ENCODE measurements at regions of chr11 and their contacts with region 1.

Region 1: GRCh38 chr11:62855571-62856332 is 16.4 kb upstream of the WDR74 start:
- DNase-seq: peak; percentile 96 to 100 (median 99)
- ATAC-seq: peak; percentile 97
- H3K4me3 ChIP-seq: peak overlapping the region; percentile 97
- H3K4me3 Mint-ChIP-seq: peak overlapping the region; percentile 93 to 100 (median 98)
- H3K27ac ChIP-seq: peak overlapping the region; percentile 85
- H3K27ac Mint-ChIP-seq: peak overlapping the region; percentile 86 to 98 (median 94)
- H3K4me1 ChIP-seq: peaks cover 33 to 39% of the 10 kb centered on the region in 2 donors
- H3K4me1 Mint-ChIP-seq: peaks cover 34 to 77% (median 46%) of the 10 kb centered on the region in 7 donors
- H3K27me3 ChIP-seq: no peaks in the 10 kb centered on the region
- H3K27me3 Mint-ChIP-seq: peaks cover 0 to 6% (median 0%) of the 10 kb centered on the region in 5 donors

Region 2: GRCh38 chr11:61627567-61628445 is 1227.9 kb before region 1 on chr11:
- CTCF ChIA-PET with region 1: no interaction called
- POLR2A ChIA-PET with region 1: no interaction called
- intact Hi-C with region 1: no loop called
- DNase-seq: peak in 3 of 9 donors; percentile 4 to 41 (median 13)
- ATAC-seq: peak; percentile 50
- H3K4me3 ChIP-seq: no peak overlapping the region
- H3K4me3 Mint-ChIP-seq: no peak overlapping the region
- H3K27ac ChIP-seq: no peak overlapping the region
- H3K27ac Mint-ChIP-seq: no peak overlapping the region
- H3K4me1 ChIP-seq: no peaks in the 10 kb centered on the region
- H3K4me1 Mint-ChIP-seq: peaks cover 0 to 6% (median 0%) of the 10 kb centered on the region in 7 donors
- H3K27me3 ChIP-seq: no peaks in the 10 kb centered on the region
- H3K27me3 Mint-ChIP-seq: peaks cover 0 to 16% (median 0%) of the 10 kb centered on the region in 5 donors

Region 3: DNA sequence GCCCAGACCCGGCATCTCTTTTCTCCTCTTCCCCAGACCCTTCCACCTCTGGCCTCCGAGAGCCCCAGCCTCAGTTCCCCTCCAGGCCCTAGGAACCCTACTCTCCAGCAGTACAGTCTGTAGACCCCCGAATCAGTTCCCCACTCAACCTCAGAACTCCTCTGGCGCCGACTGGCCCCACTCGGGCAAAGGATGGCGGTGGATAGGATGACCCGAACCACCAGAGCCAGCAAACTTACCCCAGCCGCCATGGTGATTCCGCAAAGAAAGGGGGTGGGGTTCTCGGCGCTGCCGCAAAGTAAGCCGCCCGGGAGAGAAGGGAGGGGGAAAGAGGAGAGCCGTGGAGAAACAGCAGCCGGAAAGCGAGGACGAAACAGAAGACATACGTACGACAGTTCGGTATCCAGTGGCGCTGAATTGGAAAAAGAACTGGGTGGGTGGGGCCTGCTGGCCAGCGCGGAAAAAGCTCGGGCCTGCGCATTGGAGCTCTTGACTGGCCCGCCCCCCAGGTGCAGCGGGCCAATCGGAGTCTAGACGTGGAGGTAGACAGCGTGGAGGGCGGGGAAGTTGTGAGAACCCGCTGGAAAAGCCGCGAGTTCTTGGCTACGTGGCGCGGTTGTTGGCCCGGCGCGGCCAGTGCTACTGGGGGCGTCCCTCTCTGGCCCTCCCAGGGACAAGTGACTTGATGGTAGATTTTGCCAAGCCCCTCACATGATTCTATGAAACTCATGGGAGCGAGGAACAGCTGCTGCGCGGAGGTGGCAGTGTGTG is 282.0 kb before region 1 on chr11 and contains the start of gene EEF1G:
- CTCF ChIA-PET with region 1: no interaction called
- POLR2A ChIA-PET with region 1: interaction called, 8 read pairs
- intact Hi-C with region 1: loop called in 1 of 2 experiments (anchors 5 kb)
- DNase-seq: peak; percentile 88 to 100 (median 99)
- ATAC-seq: peak; percentile 96
- H3K4me3 ChIP-seq: peak within 1 kb of the TSS; percentile 82
- H3K4me3 Mint-ChIP-seq: peak within 1 kb of the TSS; percentile 94 to 100 (median 97)
- H3K27ac ChIP-seq: peak within 1 kb of the TSS; percentile 88
- H3K27ac Mint-ChIP-seq: peak within 1 kb of the TSS; percentile 81 to 98 (median 95)
- H3K4me1 ChIP-seq: peaks cover 8 to 11% of the 10 kb centered on the region in 2 donors
- H3K4me1 Mint-ChIP-seq: peaks cover 39 to 61% (median 45%) of the 10 kb centered on the region in 7 donors
- H3K27me3 ChIP-seq: no peaks in the 10 kb centered on the region
- H3K27me3 Mint-ChIP-seq: no peaks in the 10 kb centered on the region
- total RNA-seq, gene EEF1G: 1,186 to 2,550 (median 2,338) TPM

Region 4: DNA sequence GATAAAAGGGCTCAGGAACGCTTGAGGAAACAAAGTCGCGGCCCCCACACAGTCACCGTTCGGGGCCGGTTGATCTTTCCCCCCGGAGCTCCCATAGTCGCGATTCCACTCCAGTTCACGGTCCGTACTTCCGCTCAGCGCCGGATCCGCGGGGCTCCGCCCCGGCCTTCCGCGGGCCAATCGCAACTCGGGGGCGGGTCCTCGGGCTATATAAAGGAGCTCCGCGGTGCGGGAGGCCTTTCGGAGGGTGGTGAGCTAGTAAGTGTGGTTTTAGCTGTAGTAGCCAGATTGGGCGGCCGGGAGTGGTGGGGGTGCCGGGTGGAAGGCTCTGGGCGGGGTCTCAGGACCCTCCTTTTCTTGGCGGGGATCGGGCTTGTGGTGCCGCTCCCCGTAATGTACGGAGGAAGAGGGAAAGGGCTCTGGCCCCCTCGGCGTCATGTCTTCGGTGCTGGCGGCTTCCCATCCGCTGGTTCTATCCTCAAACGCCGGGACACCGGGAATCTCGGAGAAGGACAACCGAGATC is 190.6 kb before region 1 on chr11 and contains the starts of genes C11orf98 and CSKMT:
- CTCF ChIA-PET with region 1: interaction called, 3 read pairs
- POLR2A ChIA-PET with region 1: interaction called, 31 read pairs
- intact Hi-C with region 1: loop called in 1 of 2 experiments (anchors 5 kb)
- DNase-seq: peak; percentile 90 to 99 (median 95)
- ATAC-seq: peak; percentile 97
- H3K4me3 ChIP-seq: peak within 1 kb of the TSS; percentile 85
- H3K4me3 Mint-ChIP-seq: peak within 1 kb of the TSS; percentile 93 to 98 (median 96)
- H3K27ac ChIP-seq: peak within 1 kb of the TSS; percentile 85
- H3K27ac Mint-ChIP-seq: peak within 1 kb of the TSS; percentile 89 to 97 (median 93)
- H3K4me1 ChIP-seq: peaks cover 16 to 21% of the 10 kb centered on the region in 2 donors
- H3K4me1 Mint-ChIP-seq: peaks cover 13 to 45% (median 32%) of the 10 kb centered on the region in 7 donors
- H3K27me3 ChIP-seq: no peaks in the 10 kb centered on the region
- H3K27me3 Mint-ChIP-seq: no peaks in the 10 kb centered on the region
- total RNA-seq, gene C11orf98: 23.2 to 103 (median 47.6) TPM
- total RNA-seq, gene CSKMT: 8.9 to 29.3 (median 23.7) TPM

Region 5: DNA sequence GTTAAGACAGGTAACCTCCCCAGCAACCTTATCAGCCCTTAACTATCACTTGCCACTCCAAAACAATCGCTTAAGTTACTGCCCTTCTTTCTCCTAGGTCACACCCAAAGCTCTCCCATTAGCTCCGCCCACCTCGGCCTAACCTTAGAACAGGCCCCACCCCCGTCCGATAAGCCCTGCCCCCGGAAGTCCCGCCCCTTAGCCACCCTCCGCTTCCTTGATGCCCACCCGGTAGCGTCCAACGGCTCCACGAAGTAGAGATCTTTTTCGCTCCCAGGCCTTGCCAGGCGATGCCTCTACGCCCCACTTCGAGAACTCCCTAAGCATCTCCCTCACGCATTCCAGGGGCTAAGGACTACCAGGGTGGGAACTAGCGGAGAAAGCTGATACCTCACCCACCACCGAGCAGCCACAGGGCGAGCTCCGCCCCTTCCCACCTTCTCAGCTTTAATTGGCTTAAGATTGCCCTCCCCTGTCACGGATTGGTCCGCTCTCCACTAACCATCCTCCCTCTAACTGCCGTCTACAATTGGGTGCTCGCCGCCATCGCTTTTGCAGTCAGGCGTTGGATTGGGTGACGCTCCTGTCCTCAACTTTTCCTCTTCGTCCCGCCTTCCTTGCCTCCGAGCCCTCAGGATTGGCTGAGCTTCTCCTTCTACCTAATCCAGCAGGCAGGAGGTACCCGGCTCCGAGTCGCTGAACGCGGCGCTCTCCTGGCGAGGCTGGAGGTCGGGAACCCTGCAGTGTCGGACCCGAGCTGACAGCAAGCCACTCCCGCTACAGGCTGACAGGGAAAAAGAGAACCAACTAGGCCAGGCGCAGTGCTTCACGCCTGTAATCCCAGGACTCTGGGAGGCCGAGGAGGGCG is 101.8 kb before region 1 on chr11 and contains the start of gene ZBTB3:
- CTCF ChIA-PET with region 1: no interaction called
- POLR2A ChIA-PET with region 1: interaction called, 50 read pairs
- intact Hi-C with region 1: loop called in 1 of 2 experiments (anchors 1 kb)
- DNase-seq: peak; percentile 89 to 99 (median 98)
- ATAC-seq: peak; percentile 96
- H3K4me3 ChIP-seq: peak within 1 kb of the TSS; percentile 94
- H3K4me3 Mint-ChIP-seq: peak within 1 kb of the TSS; percentile 86 to 100 (median 98)
- H3K27ac ChIP-seq: peak within 1 kb of the TSS; percentile 83
- H3K27ac Mint-ChIP-seq: peak within 1 kb of the TSS; percentile 93 to 99 (median 95)
- H3K4me1 ChIP-seq: peaks cover 15 to 16% of the 10 kb centered on the region in 2 donors
- H3K4me1 Mint-ChIP-seq: peaks cover 9 to 41% (median 29%) of the 10 kb centered on the region in 7 donors
- H3K27me3 ChIP-seq: no peaks in the 10 kb centered on the region
- H3K27me3 Mint-ChIP-seq: no peaks in the 10 kb centered on the region
- total RNA-seq, gene ZBTB3: 6.4 to 24.1 (median 19.0) TPM

Region 6: DNA sequence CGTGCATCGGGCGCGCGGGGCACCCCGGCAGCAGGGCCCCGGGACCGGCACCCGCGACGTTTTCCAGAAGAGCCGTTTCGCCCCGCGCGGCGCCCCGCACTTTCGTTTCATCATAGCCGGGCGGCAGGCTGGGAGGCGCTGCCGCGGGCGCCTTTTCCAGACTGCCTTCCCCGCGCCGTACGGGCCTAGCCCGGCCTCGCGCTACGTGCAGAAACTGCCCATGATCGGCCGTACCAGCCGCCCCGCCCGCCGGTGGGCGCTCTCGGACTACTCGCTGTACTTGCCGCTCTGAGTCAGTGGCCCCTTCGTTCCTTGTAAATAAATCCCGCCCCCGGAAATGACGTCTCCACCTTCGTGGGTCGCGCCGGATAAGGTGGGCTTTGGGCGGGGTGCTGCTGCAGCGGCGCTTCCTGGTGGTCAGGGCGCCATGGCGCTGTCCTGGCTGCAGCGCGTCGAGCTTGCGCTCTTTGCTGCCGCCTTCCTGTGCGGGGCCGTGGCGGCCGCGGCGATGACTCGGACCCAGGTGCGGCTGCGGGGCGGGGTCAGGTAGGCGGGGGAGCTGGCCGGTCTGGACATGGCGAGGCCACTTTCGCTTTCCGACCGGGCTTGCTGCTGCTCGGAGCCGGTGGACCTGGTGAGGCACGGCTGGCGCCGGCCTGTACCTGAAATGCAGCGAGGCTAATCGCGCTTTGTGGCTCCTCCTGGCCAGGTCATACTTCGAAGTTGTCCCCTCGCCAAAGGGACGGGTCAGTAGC is 68.6 kb before region 1 on chr11 and contains the start of gene TMEM179B:
- CTCF ChIA-PET with region 1: interaction called, 34 read pairs
- POLR2A ChIA-PET with region 1: interaction called, 164 read pairs
- intact Hi-C with region 1: loop called (anchors 1 kb)
- DNase-seq: peak; percentile 87 to 98 (median 95)
- ATAC-seq: peak; percentile 83
- H3K4me3 ChIP-seq: peak within 1 kb of the TSS; percentile 82
- H3K4me3 Mint-ChIP-seq: peak within 1 kb of the TSS; percentile 93 to 97 (median 96)
- H3K27ac ChIP-seq: peak within 1 kb of the TSS; percentile 93
- H3K27ac Mint-ChIP-seq: peak within 1 kb of the TSS; percentile 91 to 99 (median 96)
- H3K4me1 ChIP-seq: peaks cover 32 to 38% of the 10 kb centered on the region in 2 donors
- H3K4me1 Mint-ChIP-seq: peaks cover 22 to 59% (median 42%) of the 10 kb centered on the region in 7 donors
- H3K27me3 ChIP-seq: no peaks in the 10 kb centered on the region
- H3K27me3 Mint-ChIP-seq: no peaks in the 10 kb centered on the region
- total RNA-seq, gene TMEM179B: 23.2 to 72.3 (median 50.9) TPM

Region 7: DNA sequence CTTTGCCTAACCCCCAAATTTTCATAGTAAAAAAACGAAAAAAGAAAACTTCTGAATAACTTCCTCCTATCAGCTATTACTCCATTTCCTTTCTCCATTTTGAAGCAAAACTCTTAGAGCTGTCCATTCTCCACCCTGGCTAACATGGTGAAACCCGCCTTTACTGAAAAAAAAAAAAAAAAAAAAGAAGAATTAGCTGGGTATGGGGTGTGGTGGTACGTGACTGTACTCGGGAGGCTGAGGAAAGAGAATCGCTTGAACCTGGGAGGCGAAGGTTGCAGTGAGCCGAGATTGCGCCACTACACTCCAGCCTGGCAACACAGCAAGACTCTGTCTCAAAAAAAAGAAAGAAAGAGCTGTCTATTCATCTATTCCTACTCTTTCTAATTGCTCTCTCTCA is 39.2 kb before region 1 on chr11:
- CTCF ChIA-PET with region 1: no interaction called
- POLR2A ChIA-PET with region 1: interaction called, 11 read pairs
- intact Hi-C with region 1: no loop called
- DNase-seq: no peak
- ATAC-seq: peak; percentile 77
- H3K4me3 ChIP-seq: no peak overlapping the region
- H3K4me3 Mint-ChIP-seq: no peak overlapping the region
- H3K27ac ChIP-seq: no peak overlapping the region
- H3K27ac Mint-ChIP-seq: peak overlapping the region in 1 of 9 donors; percentile 8
- H3K4me1 ChIP-seq: no peaks in the 10 kb centered on the region
- H3K4me1 Mint-ChIP-seq: peaks cover 0 to 9% (median 0%) of the 10 kb centered on the region in 7 donors
- H3K27me3 ChIP-seq: no peaks in the 10 kb centered on the region
- H3K27me3 Mint-ChIP-seq: no peaks in the 10 kb centered on the region

Region 8: DNA sequence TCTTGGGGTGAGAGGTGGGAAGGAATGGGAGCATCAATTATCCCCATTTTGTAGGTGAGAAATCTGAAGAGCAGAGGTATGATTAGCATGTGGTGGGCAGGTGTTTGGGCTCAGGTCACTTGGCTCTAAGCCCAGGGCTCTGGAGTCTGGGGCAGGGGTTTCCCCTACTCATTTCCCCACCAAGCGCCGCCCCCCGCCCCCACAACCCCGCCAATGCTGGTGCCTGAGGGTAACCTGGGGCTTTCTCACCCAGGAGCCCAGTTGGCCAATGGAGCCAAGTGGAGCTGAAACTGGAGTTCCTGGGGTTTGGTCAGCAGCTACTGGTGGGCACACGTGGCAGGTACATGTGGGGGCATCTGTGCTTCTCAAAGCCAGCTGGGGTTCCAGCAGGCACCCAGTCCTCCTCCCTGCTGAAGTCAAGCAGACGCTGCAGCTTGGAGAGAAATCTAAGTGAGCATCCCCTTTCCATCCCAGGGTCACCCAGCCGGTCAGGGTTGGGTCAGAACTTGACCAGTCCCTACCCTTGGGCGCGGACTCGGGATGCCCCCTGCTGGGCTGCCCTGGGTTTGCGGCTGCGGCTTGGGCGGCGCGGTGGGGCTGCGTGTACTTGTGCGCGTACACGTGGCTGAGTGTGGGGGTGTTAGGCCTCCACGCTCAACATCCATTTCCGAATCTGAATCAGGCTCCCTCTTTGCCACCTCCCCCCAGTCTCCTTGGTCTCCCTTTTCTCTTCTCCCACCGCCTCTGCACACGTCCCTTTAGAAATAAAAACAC is 67.1 kb after region 1 on chr11:
- CTCF ChIA-PET with region 1: no interaction called
- POLR2A ChIA-PET with region 1: no interaction called
- intact Hi-C with region 1: no loop called
- DNase-seq: peak in 1 of 9 donors; percentile 52
- ATAC-seq: no peak
- H3K4me3 ChIP-seq: no peak overlapping the region
- H3K4me3 Mint-ChIP-seq: peak overlapping the region in 9 of 10 donors; percentile 58 to 88 (median 73)
- H3K27ac ChIP-seq: no peak overlapping the region
- H3K27ac Mint-ChIP-seq: peak overlapping the region in 1 of 9 donors; percentile 63
- H3K4me1 ChIP-seq: peaks cover 9 to 23% of the 10 kb centered on the region in 2 donors
- H3K4me1 Mint-ChIP-seq: peaks cover 8 to 37% (median 24%) of the 10 kb centered on the region in 7 donors
- H3K27me3 ChIP-seq: peaks cover 0 to 14% of the 10 kb centered on the region in 2 donors
- H3K27me3 Mint-ChIP-seq: peaks cover 42 to 87% (median 44%) of the 10 kb centered on the region in 5 donors

Measured in naive thymus-derived CD4-positive, alpha-beta T cell (primary cell).